ENCODE measurements at regions of chr7 and their contacts with region 1.

Region 1: DNA sequence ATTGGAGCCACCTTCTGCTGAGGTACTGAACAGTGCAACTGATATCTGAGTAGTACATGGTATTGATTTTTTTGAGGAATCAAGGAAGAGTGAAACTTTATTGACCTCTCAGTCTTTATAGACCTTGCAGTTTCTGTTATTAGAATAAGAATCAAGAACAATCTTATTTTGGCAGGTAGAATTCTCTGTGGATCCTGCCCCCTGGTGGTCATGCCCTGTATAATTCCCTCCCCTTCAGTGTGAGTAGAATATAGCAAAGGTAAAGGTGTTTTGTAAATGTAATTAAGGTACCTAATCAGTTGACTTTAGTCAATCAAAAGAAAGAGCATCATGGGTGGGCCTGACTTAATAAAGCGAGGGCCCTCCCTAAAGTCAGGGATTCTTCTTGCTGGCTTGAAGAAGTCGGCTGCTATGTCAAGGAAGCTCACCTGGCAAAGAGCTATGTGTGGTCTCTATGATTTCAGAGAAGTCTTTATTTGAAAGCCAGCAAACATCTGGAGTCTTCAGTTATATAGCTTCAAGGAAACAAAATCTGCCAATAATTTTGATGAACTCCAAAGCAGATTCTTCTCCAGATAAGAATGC is 142.8 kb downstream of the LSM5 start:
- DNase-seq: peak; percentile 38
- H3K4me3 Mint-ChIP-seq: no peak overlapping the region
- H3K27ac Mint-ChIP-seq: no peak overlapping the region
- H3K4me1 Mint-ChIP-seq: no peaks in the 10 kb centered on the region
- H3K27me3 Mint-ChIP-seq: no peaks in the 10 kb centered on the region

Region 2: GRCh38 chr7:31744294-31744874 is 603.0 kb before region 1 on chr7:
- CTCF ChIA-PET with region 1: no interaction called
- POLR2A ChIA-PET with region 1: no interaction called
- intact Hi-C with region 1: loop called (anchors 10 kb)
- DNase-seq: peak; percentile 55
- H3K4me3 Mint-ChIP-seq: no peak overlapping the region
- H3K27ac Mint-ChIP-seq: no peak overlapping the region
- H3K4me1 Mint-ChIP-seq: no peaks in the 10 kb centered on the region
- H3K27me3 Mint-ChIP-seq: peaks cover 1% of the 10 kb centered on the region

Region 3: GRCh38 chr7:32204361-32205018 is 142.8 kb before region 1 on chr7:
- CTCF ChIA-PET with region 1: interaction called, 19 read pairs
- POLR2A ChIA-PET with region 1: no interaction called
- intact Hi-C with region 1: no loop called
- DNase-seq: peak; percentile 14
- H3K4me3 Mint-ChIP-seq: no peak overlapping the region
- H3K27ac Mint-ChIP-seq: no peak overlapping the region
- H3K4me1 Mint-ChIP-seq: no peaks in the 10 kb centered on the region
- H3K27me3 Mint-ChIP-seq: no peaks in the 10 kb centered on the region

Region 4: DNA sequence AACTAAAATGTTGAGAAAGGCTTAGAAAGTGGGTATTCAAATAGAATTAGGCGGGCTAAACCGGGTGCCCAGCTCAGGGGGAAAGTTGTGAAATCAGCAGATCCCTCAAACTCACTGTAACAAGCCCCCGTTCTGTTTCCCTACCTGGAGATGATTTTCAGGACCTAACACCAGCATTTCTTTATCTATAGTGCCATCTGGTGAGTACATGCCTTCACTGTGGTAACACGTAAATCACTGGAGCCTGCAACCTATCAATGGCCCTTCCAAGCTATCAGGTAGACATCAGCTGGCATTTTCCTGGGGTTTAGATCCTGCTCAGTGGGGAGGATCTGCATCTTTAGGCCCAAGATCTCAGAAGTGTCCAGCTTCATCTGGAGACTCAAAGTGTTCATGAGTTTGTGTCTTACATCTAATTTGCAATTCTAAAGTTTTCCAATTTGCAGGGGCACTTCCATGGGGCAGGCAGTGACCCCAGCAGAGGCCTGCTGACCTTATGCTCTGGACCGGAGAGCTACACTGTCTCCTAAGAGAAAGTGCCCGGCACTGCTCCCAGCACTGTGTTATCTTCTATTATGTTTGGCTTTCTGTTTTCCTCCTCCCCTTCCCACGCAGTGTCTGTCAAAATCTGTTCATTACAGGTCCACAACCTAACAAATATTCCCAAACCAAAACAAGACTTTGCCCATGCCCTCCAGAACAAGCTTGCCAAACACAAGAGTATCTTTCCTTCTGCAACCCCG is 10.4 kb after region 1 on chr7:
- CTCF ChIA-PET with region 1: interaction called, 10 read pairs
- POLR2A ChIA-PET with region 1: no interaction called
- intact Hi-C with region 1: no loop called
- DNase-seq: no peak
- H3K4me3 Mint-ChIP-seq: no peak overlapping the region
- H3K27ac Mint-ChIP-seq: no peak overlapping the region
- H3K4me1 Mint-ChIP-seq: no peaks in the 10 kb centered on the region
- H3K27me3 Mint-ChIP-seq: peaks cover 3% of the 10 kb centered on the region

Region 5: DNA sequence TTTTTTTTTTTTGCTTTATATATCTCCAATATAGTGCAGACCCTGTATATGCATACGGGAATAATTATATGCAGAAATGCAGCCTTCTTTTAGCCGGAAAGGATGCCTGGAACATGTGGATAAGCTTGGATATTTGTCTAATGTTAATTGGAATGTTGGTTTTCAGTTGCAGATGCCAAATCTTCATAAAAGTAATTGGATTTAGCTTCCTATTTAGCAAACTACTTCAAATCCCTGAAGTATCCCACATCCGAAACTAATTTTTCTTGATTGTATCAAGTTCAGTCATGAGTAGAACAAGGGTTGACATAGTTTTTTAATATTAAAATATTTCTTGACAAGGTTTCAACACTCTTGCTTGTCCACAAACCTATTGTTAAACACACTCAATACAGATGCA is 1063.7 kb after region 1 on chr7:
- CTCF ChIA-PET with region 1: no interaction called
- POLR2A ChIA-PET with region 1: no interaction called
- intact Hi-C with region 1: no loop called
- DNase-seq: no peak
- H3K4me3 Mint-ChIP-seq: no peak overlapping the region
- H3K27ac Mint-ChIP-seq: no peak overlapping the region
- H3K4me1 Mint-ChIP-seq: no peaks in the 10 kb centered on the region
- H3K27me3 Mint-ChIP-seq: no peaks in the 10 kb centered on the region